ENCODE measurements at regions of chr1 and their contacts with region 1.

Region 1: DNA sequence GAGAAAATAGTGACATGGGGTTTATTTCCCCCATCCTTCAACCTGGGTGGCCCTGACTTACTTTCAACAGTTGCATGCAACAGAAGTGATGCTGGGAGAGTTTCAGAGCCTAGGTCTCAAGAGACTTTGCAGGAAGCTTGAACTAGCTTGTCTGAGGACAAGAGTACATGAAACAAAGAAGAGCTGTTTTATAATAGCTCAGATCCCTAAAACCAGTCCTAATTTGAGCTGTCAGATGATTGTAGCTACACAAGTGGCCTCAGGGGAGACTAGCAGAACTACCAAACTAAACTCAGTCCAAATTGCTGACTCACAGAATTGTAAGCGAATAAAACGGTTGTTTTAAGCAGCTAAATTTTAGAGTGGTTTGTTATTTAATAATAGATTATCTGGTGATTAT is 17.1 kb downstream of the RC3H1 start:
- DNase-seq: peak; percentile 83
- ATAC-seq: peak; percentile 95
- H3K4me3 ChIP-seq: no peak overlapping the region
- H3K27ac ChIP-seq: peak overlapping the region; percentile 54
- H3K4me1 ChIP-seq: peaks cover 10% of the 10 kb centered on the region
- H3K27me3 ChIP-seq: no peaks in the 10 kb centered on the region
- CTCF ChIP-seq: no peak
- EP300 ChIP-seq: peak; percentile 32 to 70; a peak in 1 of 4 replicates
- POLR2A ChIP-seq: no peak
- RAD21 ChIP-seq: no peak

Region 2: GRCh38 chr1:174159252-174160108 is 154.4 kb after region 1 on chr1 and contains the start of gene RABGAP1L:
- CTCF ChIA-PET with region 1: no interaction called
- POLR2A ChIA-PET with region 1: no interaction called
- RAD21 ChIA-PET with region 1: no interaction called
- SMC1A ChIA-PET with region 1: no interaction called
- in situ Hi-C with region 1: no loop called
- intact Hi-C with region 1: loop called (anchors 5 kb)
- DNase-seq: peak; percentile 55
- ATAC-seq: peak; percentile 84
- H3K4me3 ChIP-seq: peak within 1 kb of the TSS; percentile 91
- H3K27ac ChIP-seq: peak within 1 kb of the TSS; percentile 93
- H3K4me1 ChIP-seq: peaks cover 31% of the 10 kb centered on the region
- H3K27me3 ChIP-seq: no peaks in the 10 kb centered on the region; a peak in 1 of 4 replicates
- CTCF ChIP-seq: no peak
- EP300 ChIP-seq: no peak
- POLR2A ChIP-seq: peak; percentile 96
- RAD21 ChIP-seq: 0 out of 2 replicates have a peak, but pooled peaks have one; percentile 6
- polyA plus RNA-seq, gene RABGAP1L: 92.3 to 130 TPM

Measured in GM12878 (cell line).